Breast epithelium (tissue), 4 donors: ENCODE measurements at regions of chr5 and their contacts with region 1.

Region 1: DNA sequence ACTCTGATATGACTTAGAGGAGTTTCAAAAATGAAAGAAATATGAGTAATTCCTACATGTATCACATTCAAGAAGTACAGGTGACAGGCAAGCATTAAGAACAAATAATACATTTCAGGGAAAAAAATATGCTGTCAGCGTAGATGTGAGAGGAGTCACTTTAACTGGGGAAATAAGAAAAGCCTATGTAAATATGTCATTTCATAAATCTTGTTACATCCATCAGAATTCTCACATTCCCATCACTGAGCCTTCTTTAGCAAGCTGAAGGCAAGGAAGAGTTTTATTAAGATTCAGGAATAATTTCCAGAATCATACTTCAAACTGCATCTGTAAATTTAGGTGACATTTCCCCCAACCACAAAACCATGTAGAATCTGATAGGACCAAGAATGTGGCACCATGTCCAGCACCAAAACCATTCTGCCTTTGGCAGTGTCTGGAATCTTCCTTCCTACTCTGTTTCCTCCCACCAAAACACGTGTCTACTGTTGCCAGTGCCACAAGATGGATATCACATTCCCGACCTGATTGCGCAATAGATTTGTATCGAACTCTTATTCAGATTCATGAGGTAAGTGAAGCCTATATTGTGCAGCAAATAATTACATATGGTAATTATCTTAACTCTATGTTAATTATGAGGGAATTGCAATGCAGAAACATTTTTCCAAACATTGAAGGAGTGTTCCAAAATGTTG is 690.9 kb downstream of the ISL1 start:
- DNase-seq: no peak
- H3K4me3 ChIP-seq: no peak overlapping the region
- H3K27ac ChIP-seq: no peak overlapping the region
- H3K4me1 ChIP-seq: no peaks in the 10 kb centered on the region
- H3K27me3 ChIP-seq: no peaks in the 10 kb centered on the region
- CTCF ChIP-seq: no peak
- POLR2A ChIP-seq: no peak

Region 2: GRCh38 chr5:50984640-50985039 is 1089.5 kb before region 1 on chr5:
- intact Hi-C with region 1: loop called (anchors 5 kb)
- DNase-seq: no peak
- H3K4me3 ChIP-seq: no peak overlapping the region
- H3K27ac ChIP-seq: no peak overlapping the region
- H3K4me1 ChIP-seq: no peaks in the 10 kb centered on the region
- H3K27me3 ChIP-seq: no peaks in the 10 kb centered on the region
- CTCF ChIP-seq: no peak
- POLR2A ChIP-seq: no peak

Region 3: DNA sequence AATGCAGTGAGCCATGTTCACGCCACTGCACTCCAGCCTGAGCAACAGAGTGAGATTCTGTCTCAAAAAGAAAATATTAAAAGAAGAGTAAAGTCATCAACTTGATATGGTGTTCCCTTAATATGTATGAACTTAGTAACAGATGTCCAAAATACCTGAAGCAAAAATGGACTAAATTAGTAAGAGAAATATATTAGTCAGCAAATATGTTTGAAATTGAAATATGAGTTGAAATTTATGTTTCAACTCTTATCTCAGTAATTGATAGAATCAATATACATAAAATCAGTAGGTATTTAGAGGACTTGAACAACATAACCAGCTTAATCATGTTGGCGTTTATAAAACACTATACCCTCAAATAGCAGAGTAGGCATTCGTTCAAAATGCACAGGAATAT is 22.4 kb before region 1 on chr5:
- intact Hi-C with region 1: no loop called
- DNase-seq: no peak
- H3K4me3 ChIP-seq: no peak overlapping the region
- H3K27ac ChIP-seq: no peak overlapping the region
- H3K4me1 ChIP-seq: no peaks in the 10 kb centered on the region
- H3K27me3 ChIP-seq: no peaks in the 10 kb centered on the region
- CTCF ChIP-seq: no peak
- POLR2A ChIP-seq: no peak

Region 4: DNA sequence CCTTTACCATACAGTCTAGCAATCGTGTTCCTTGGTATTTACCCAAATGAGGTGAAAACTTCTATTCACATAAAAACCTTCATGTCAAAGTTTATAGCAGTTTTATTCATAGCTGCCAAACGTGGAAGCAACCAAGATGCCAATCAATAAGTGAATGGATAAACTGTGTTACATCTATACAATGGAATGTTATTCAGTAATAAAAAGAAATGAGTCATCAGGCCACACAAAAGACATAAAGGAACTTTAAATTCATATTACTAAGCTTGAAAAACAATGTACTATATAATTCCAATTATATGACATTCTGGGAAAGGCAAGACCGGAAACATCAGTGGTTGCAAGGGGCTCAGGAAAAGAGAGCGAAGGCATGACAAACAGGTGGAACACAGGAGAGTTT is 11.0 kb before region 1 on chr5:
- intact Hi-C with region 1: no loop called
- DNase-seq: no peak
- H3K4me3 ChIP-seq: no peak overlapping the region
- H3K27ac ChIP-seq: no peak overlapping the region
- H3K4me1 ChIP-seq: no peaks in the 10 kb centered on the region
- H3K27me3 ChIP-seq: no peaks in the 10 kb centered on the region
- CTCF ChIP-seq: no peak
- POLR2A ChIP-seq: no peak

Region 5: GRCh38 chr5:52134013-52134650 is 60.0 kb after region 1 on chr5:
- intact Hi-C with region 1: no loop called
- DNase-seq: no peak
- H3K4me3 ChIP-seq: no peak overlapping the region
- H3K27ac ChIP-seq: no peak overlapping the region
- H3K4me1 ChIP-seq: no peaks in the 10 kb centered on the region
- H3K27me3 ChIP-seq: no peaks in the 10 kb centered on the region
- CTCF ChIP-seq: no peak
- POLR2A ChIP-seq: no peak

Region 6: GRCh38 chr5:52632281-52632680 is 558.1 kb after region 1 on chr5:
- intact Hi-C with region 1: no loop called
- DNase-seq: no peak
- H3K4me3 ChIP-seq: no peak overlapping the region
- H3K27ac ChIP-seq: no peak overlapping the region
- H3K4me1 ChIP-seq: no peaks in the 10 kb centered on the region
- H3K27me3 ChIP-seq: no peaks in the 10 kb centered on the region
- CTCF ChIP-seq: no peak
- POLR2A ChIP-seq: no peak